Activated naive CD4-positive, alpha-beta T cell treated with anti-CD3 and anti-CD28 coated beads for 36 hours (primary cell): ENCODE measurements at regions of chr5 and their contacts with region 1.

Region 1: DNA sequence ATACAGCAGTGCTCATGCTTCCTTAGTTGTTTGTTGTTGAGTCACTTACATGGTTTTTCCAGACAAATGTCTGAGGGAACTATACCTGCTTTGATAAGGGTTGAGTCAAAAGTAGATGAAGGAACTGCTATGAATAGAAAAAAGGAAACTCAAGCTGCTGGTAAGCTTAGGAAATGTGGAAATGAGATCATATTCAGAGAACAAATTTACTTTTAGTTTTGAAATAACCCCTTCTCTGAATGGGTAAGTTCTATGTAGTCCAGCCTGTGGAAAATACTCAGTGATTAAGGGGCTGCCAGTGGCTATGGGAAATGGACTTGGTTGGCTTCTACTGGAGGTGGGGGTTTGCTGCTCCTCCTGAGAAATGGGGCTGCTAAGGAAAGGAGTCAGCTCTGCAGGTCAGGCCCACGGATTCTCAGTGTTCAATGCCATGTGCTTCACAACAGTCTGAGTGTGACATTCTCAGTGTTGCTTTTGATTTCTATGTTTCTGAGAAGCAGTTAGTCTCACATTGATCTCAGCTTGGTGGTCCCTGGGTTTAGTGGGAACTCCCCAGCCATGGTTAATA is 47.7 kb upstream of the GLRX start:
- DNase-seq: peak; percentile 65
- H3K4me3 Mint-ChIP-seq: peak overlapping the region; percentile 68
- H3K27ac Mint-ChIP-seq: peak overlapping the region; percentile 99
- H3K4me1 Mint-ChIP-seq: peaks cover 59% of the 10 kb centered on the region
- H3K27me3 Mint-ChIP-seq: no peaks in the 10 kb centered on the region

Region 2: GRCh38 chr5:95822542-95823181 is 47.5 kb before region 1 on chr5 and contains the start of gene GLRX:
- CTCF ChIA-PET with region 1: interaction called, 3 read pairs
- intact Hi-C with region 1: loop called (anchors 2 kb)
- DNase-seq: peak; percentile 64
- H3K4me3 Mint-ChIP-seq: peak within 1 kb of the TSS; percentile 96
- H3K27ac Mint-ChIP-seq: peak within 1 kb of the TSS; percentile 98
- H3K4me1 Mint-ChIP-seq: peaks cover 61% of the 10 kb centered on the region
- H3K27me3 Mint-ChIP-seq: no peaks in the 10 kb centered on the region
- total RNA-seq, gene GLRX: 50.4 to 51.1 TPM

Region 3: GRCh38 chr5:95858661-95859326 is 11.4 kb before region 1 on chr5:
- CTCF ChIA-PET with region 1: interaction called, 9 read pairs
- intact Hi-C with region 1: loop called (anchors 1 kb)
- DNase-seq: peak; percentile 98
- H3K4me3 Mint-ChIP-seq: peak overlapping the region; percentile 30
- H3K27ac Mint-ChIP-seq: peak overlapping the region; percentile 83
- H3K4me1 Mint-ChIP-seq: peaks cover 52% of the 10 kb centered on the region
- H3K27me3 Mint-ChIP-seq: no peaks in the 10 kb centered on the region

Region 4: GRCh38 chr5:96079075-96079474 is 208.9 kb after region 1 on chr5:
- CTCF ChIA-PET with region 1: no interaction called
- intact Hi-C with region 1: loop called (anchors 1 kb)
- DNase-seq: peak; percentile 71
- H3K4me3 Mint-ChIP-seq: no peak overlapping the region
- H3K27ac Mint-ChIP-seq: peak overlapping the region; percentile 77
- H3K4me1 Mint-ChIP-seq: peaks cover 38% of the 10 kb centered on the region
- H3K27me3 Mint-ChIP-seq: peaks cover 9% of the 10 kb centered on the region

Region 5: GRCh38 chr5:96151891-96152290 is 281.7 kb after region 1 on chr5:
- CTCF ChIA-PET with region 1: no interaction called
- intact Hi-C with region 1: loop called (anchors 1 kb)
- DNase-seq: peak; percentile 63
- H3K4me3 Mint-ChIP-seq: no peak overlapping the region
- H3K27ac Mint-ChIP-seq: peak overlapping the region; percentile 10
- H3K4me1 Mint-ChIP-seq: peaks cover 6% of the 10 kb centered on the region
- H3K27me3 Mint-ChIP-seq: no peaks in the 10 kb centered on the region

Region 6: DNA sequence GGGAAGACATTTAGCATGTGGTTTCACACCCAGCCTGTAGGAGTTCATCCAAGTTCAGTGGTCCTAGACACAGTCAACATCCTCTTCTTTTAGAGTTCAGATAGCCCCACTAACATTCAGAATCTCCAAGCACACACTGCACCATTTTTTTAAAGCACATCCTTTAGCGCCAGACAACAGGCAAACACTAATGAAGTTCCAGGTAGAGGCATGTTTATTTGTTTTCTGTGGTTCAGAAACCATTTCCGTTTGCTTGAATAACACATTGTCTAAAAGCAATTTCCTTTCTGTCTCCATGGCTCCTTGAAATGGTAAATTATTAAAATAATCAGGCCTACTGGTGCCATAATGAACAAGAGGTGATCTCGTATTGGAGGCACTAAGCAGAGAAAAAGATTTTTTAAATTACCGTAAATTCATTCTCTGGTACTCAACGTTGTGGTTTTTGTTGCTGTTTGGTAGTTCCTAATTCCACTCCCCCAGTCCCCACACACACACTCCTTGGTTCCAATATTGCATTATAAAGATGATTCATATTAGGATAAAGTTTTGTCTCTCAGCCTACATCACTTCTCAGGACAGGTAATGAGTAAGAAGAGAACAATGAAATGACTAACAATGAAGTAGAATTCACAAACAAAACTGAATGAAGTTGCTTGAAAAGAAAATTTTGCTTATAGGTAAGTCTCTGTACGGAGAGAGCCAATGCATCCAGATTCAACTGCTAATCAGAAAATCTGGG is 409.8 kb after region 1 on chr5:
- CTCF ChIA-PET with region 1: no interaction called
- intact Hi-C with region 1: loop called (anchors 1 kb)
- DNase-seq: peak; percentile 37
- H3K4me3 Mint-ChIP-seq: no peak overlapping the region
- H3K27ac Mint-ChIP-seq: peak overlapping the region; percentile 31
- H3K4me1 Mint-ChIP-seq: peaks cover 13% of the 10 kb centered on the region
- H3K27me3 Mint-ChIP-seq: peaks cover 26% of the 10 kb centered on the region

Region 7: GRCh38 chr5:97547999-97548738 is 1678.0 kb after region 1 on chr5:
- CTCF ChIA-PET with region 1: no interaction called
- intact Hi-C with region 1: loop called (anchors 2 kb)
- DNase-seq: peak; percentile 11
- H3K4me3 Mint-ChIP-seq: no peak overlapping the region
- H3K27ac Mint-ChIP-seq: peak overlapping the region; percentile 6
- H3K4me1 Mint-ChIP-seq: peaks cover 18% of the 10 kb centered on the region
- H3K27me3 Mint-ChIP-seq: peaks cover 3% of the 10 kb centered on the region